Activated CD4-positive, alpha-beta memory T cell treated with anti-CD3 and anti-CD28 coated beads for 36 hours (primary cell): ENCODE measurements at regions of chr6 and their contacts with region 1.

Region 1: GRCh38 chr6:14711056-14711703 is 534.7 kb upstream of the JARID2 start:
- DNase-seq: peak; percentile 86
- H3K4me3 Mint-ChIP-seq: peak overlapping the region; percentile 80
- H3K27ac Mint-ChIP-seq: peak overlapping the region; percentile 96
- H3K4me1 Mint-ChIP-seq: peaks cover 70% of the 10 kb centered on the region
- H3K27me3 Mint-ChIP-seq: no peaks in the 10 kb centered on the region

Region 2: GRCh38 chr6:14276667-14277404 is 434.3 kb before region 1 on chr6:
- CTCF ChIA-PET with region 1: no interaction called
- POLR2A ChIA-PET with region 1: no interaction called
- intact Hi-C with region 1: loop called (anchors 5 kb)
- DNase-seq: peak; percentile 44
- H3K4me3 Mint-ChIP-seq: no peak overlapping the region
- H3K27ac Mint-ChIP-seq: peak overlapping the region; percentile 85
- H3K4me1 Mint-ChIP-seq: peaks cover 39% of the 10 kb centered on the region
- H3K27me3 Mint-ChIP-seq: no peaks in the 10 kb centered on the region

Region 3: GRCh38 chr6:14452567-14453527 is 258.3 kb before region 1 on chr6:
- CTCF ChIA-PET with region 1: interaction called, 3 read pairs
- POLR2A ChIA-PET with region 1: interaction called, 4 read pairs
- intact Hi-C with region 1: loop called (anchors 1 kb)
- DNase-seq: peak; percentile 88
- H3K4me3 Mint-ChIP-seq: peak overlapping the region; percentile 34
- H3K27ac Mint-ChIP-seq: peak overlapping the region; percentile 88
- H3K4me1 Mint-ChIP-seq: peaks cover 76% of the 10 kb centered on the region
- H3K27me3 Mint-ChIP-seq: no peaks in the 10 kb centered on the region

Region 4: GRCh38 chr6:14550822-14551221 is 160.4 kb before region 1 on chr6:
- CTCF ChIA-PET with region 1: no interaction called
- POLR2A ChIA-PET with region 1: no interaction called
- intact Hi-C with region 1: no loop called
- DNase-seq: no peak
- H3K4me3 Mint-ChIP-seq: no peak overlapping the region
- H3K27ac Mint-ChIP-seq: no peak overlapping the region
- H3K4me1 Mint-ChIP-seq: no peaks in the 10 kb centered on the region
- H3K27me3 Mint-ChIP-seq: peaks cover 2% of the 10 kb centered on the region

Region 5: DNA sequence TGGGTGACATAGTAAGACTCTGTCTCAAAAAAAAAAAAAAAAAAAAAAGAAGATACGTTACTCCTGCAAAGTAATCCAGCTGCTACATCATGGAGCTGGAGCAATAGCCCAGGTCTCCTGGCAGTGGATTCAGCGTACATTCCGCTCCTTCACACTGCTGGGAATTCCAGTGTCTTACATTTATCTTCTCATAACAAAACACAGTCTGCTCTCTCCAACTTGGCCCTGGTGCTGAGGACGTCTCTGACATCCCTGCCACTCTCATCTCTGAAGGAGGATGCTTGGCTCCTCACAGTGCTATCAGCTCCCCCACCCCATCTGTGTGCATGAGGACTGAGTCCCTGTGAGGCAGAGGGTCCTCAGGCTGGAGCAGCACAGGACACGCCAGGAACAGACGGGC is 63.8 kb before region 1 on chr6:
- CTCF ChIA-PET with region 1: no interaction called
- POLR2A ChIA-PET with region 1: no interaction called
- intact Hi-C with region 1: no loop called
- DNase-seq: no peak
- H3K4me3 Mint-ChIP-seq: no peak overlapping the region
- H3K27ac Mint-ChIP-seq: no peak overlapping the region
- H3K4me1 Mint-ChIP-seq: peaks cover 7% of the 10 kb centered on the region
- H3K27me3 Mint-ChIP-seq: no peaks in the 10 kb centered on the region

Region 6: GRCh38 chr6:14660806-14661579 is 50.2 kb before region 1 on chr6:
- CTCF ChIA-PET with region 1: interaction called, 7 read pairs
- POLR2A ChIA-PET with region 1: interaction called, 4 read pairs
- intact Hi-C with region 1: loop called (anchors 5 kb)
- DNase-seq: peak; percentile 64
- H3K4me3 Mint-ChIP-seq: no peak overlapping the region
- H3K27ac Mint-ChIP-seq: no peak overlapping the region
- H3K4me1 Mint-ChIP-seq: peaks cover 57% of the 10 kb centered on the region
- H3K27me3 Mint-ChIP-seq: no peaks in the 10 kb centered on the region

Region 7: DNA sequence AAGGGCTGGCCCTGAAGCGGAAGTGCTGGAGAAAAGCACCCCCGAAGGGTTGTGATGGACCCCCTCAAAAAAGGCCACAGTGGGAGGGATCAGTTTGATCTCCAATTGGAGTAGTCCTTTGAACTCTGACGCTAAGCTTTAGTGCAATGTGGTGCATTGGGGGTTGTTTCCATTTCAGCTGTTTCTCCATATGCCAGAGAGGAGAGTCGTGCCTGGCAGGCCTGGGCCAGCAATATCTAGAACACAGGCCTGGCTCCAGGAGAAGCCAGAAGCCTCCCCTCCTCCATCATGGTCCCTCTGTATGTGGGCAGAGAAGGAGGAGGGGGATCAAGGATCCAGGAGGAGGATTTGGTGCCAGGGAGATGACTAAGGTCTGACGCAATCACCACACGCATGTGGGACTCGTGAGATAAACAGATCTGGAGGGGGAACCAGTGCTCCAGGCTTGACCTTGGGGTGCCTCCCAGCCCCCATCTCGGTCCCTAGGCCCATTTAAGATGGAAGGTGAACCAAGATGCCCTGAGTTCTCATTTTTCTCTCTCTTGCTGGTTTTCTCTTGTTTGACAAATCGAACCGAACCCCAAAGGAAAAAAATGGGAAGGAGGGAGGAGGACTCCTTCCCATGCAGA is 17.3 kb after region 1 on chr6:
- CTCF ChIA-PET with region 1: interaction called, 45 read pairs
- POLR2A ChIA-PET with region 1: interaction called, 125 read pairs
- intact Hi-C with region 1: loop called (anchors 1 kb)
- DNase-seq: peak; percentile 51
- H3K4me3 Mint-ChIP-seq: peak overlapping the region; percentile 66
- H3K27ac Mint-ChIP-seq: peak overlapping the region; percentile 100
- H3K4me1 Mint-ChIP-seq: peaks cover 85% of the 10 kb centered on the region
- H3K27me3 Mint-ChIP-seq: no peaks in the 10 kb centered on the region

Region 8: DNA sequence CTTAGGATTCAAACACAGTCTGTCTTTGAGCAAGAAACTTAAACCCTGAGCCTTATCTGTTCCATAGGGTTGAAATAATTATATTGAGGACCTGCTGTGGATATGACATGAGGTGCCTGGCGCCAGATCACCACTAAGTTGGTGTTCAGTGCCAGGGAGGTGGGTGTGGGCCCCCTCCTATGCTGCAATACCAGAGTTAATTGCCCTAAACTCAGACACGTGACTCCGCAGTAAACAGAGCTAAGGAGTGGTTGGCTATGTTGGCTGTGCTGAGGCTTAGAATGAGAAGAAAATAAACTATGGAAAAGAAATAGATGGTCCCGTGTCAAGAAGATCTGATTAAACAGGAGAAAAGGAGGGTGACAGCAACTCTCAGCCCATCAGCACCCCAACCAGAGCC is 115.3 kb after region 1 on chr6:
- CTCF ChIA-PET with region 1: no interaction called
- POLR2A ChIA-PET with region 1: no interaction called
- intact Hi-C with region 1: no loop called
- DNase-seq: no peak
- H3K4me3 Mint-ChIP-seq: no peak overlapping the region
- H3K27ac Mint-ChIP-seq: no peak overlapping the region
- H3K4me1 Mint-ChIP-seq: peaks cover 6% of the 10 kb centered on the region
- H3K27me3 Mint-ChIP-seq: peaks cover 3% of the 10 kb centered on the region